CD4-positive, alpha-beta T cell (primary cell): ENCODE measurements at regions of chr17 and their contacts with region 1.

Region 1: GRCh38 chr17:42388381-42389134 is at the start of gene STAT3:
- DNase-seq: peak; percentile 100
- ATAC-seq: peak; percentile 78
- H3K4me3 ChIP-seq: peak within 1 kb of the TSS; percentile 92
- H3K4me3 Mint-ChIP-seq: peak within 1 kb of the TSS; percentile 97
- H3K27ac ChIP-seq: peak within 1 kb of the TSS; percentile 99 to 100
- H3K27ac Mint-ChIP-seq: peak within 1 kb of the TSS; percentile 99
- H3K4me1 ChIP-seq: peaks cover 26% of the 10 kb centered on the region
- H3K4me1 Mint-ChIP-seq: peaks cover 52% of the 10 kb centered on the region
- H3K27me3 ChIP-seq: no peaks in the 10 kb centered on the region
- H3K27me3 Mint-ChIP-seq: no peaks in the 10 kb centered on the region
- CTCF ChIP-seq: no peak
- total RNA-seq, gene STAT3: 315 to 319 TPM

Region 2: DNA sequence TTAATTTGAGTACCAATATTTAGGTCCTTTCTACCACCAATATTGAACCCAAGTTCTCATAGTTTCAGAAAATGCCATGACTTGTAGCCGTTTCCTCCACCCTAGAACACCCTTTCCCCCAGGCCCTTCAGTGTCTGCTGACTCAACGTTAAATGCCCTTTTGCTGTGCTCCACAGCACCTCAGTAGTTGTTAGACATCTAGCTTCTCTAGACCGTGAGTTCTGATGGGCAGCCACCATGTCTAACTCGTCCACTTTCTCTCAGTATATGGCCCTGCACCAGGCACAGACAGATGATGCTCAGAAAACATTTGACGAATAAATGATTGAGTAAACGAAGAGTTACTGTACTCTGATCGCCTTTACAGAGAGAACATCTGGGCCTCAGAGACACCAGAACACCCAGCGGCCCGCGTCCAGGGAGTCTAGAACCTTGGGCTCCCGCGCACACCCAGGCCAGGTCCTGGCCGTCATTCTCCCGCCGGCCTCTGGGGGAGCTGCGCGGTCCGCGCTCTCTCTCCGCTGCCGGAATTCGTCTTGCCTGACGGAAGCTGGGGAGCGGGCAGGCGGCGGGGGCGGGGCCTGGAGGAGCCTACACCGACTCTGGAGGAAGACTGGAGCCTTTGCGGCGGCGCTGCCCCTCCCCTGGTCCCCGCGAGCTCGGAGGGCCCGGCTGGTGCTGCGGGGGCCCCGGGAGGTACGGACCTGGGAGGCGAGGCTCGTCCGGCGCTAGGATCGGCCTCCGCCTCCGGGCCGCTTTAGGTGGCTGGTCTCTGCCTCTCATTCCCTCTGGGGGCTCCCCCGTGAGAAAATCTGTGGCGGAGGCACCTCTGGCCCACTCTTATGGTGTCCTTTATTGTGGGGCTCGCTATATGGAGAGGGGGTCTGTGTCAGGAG is 368.8 kb before region 1 on chr17 and contains the start of gene NKIRAS2:
- CTCF ChIA-PET with region 1: no interaction called
- POLR2A ChIA-PET with region 1: interaction called, 19 read pairs
- intact Hi-C with region 1: no loop called
- DNase-seq: peak; percentile 88 to 95 (median 92)
- ATAC-seq: peak; percentile 78
- H3K4me3 ChIP-seq: peak within 1 kb of the TSS; percentile 93
- H3K4me3 Mint-ChIP-seq: peak within 1 kb of the TSS; percentile 100
- H3K27ac ChIP-seq: peak within 1 kb of the TSS; percentile 64 to 80
- H3K27ac Mint-ChIP-seq: peak within 1 kb of the TSS; percentile 98
- H3K4me1 ChIP-seq: peaks cover 56% of the 10 kb centered on the region
- H3K4me1 Mint-ChIP-seq: peaks cover 66% of the 10 kb centered on the region
- H3K27me3 ChIP-seq: no peaks in the 10 kb centered on the region
- H3K27me3 Mint-ChIP-seq: no peaks in the 10 kb centered on the region
- CTCF ChIP-seq: peak; percentile 94
- total RNA-seq, gene NKIRAS2: 12.5 to 12.9 TPM

Region 3: GRCh38 chr17:42276359-42276608 is 112.3 kb before region 1 on chr17 and contains the start of gene STAT5B:
- CTCF ChIA-PET with region 1: no interaction called
- POLR2A ChIA-PET with region 1: interaction called, 21 read pairs
- intact Hi-C with region 1: no loop called
- DNase-seq: peak; percentile 33 to 89 (median 63)
- ATAC-seq: peak; percentile 32
- H3K4me3 ChIP-seq: peak within 1 kb of the TSS; percentile 91
- H3K4me3 Mint-ChIP-seq: peak within 1 kb of the TSS; percentile 92
- H3K27ac ChIP-seq: peak within 1 kb of the TSS; percentile 67 to 76
- H3K27ac Mint-ChIP-seq: peak within 1 kb of the TSS; percentile 91
- H3K4me1 ChIP-seq: peaks cover 16% of the 10 kb centered on the region
- H3K4me1 Mint-ChIP-seq: peaks cover 49% of the 10 kb centered on the region
- H3K27me3 ChIP-seq: no peaks in the 10 kb centered on the region
- H3K27me3 Mint-ChIP-seq: no peaks in the 10 kb centered on the region
- CTCF ChIP-seq: no peak
- total RNA-seq, gene STAT5B: 99.4 to 104 TPM

Region 4: DNA sequence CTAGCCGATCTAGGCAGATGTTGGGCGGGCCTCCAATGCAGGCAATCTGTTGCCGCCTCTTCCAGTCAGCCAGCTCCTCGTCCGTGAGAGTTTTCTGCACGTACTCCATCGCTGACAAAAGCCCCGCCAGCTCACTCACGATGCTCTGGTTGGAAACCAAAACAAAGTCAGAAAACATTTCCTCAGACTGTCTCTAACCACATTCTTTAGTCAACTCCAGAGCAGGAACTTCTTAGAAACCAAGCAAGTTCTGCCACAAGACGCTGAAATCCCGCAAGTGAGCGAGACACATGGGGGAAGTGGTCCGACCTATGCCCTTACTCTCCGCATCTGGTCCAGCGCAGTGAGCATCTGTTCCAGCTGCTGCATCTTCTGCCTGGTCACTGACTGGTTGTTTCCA is 51.1 kb before region 1 on chr17:
- CTCF ChIA-PET with region 1: interaction called, 7 read pairs
- POLR2A ChIA-PET with region 1: interaction called, 46 read pairs
- intact Hi-C with region 1: loop called (anchors 1 kb)
- DNase-seq: peak; percentile 55 to 91 (median 66)
- ATAC-seq: peak; percentile 84
- H3K4me3 ChIP-seq: no peak overlapping the region
- H3K4me3 Mint-ChIP-seq: peak overlapping the region; percentile 56
- H3K27ac ChIP-seq: peak overlapping the region; percentile 42 to 56
- H3K27ac Mint-ChIP-seq: peak overlapping the region; percentile 89
- H3K4me1 ChIP-seq: peaks cover 57% of the 10 kb centered on the region
- H3K4me1 Mint-ChIP-seq: peaks cover 51% of the 10 kb centered on the region
- H3K27me3 ChIP-seq: no peaks in the 10 kb centered on the region
- H3K27me3 Mint-ChIP-seq: no peaks in the 10 kb centered on the region
- CTCF ChIP-seq: no peak

Region 5: DNA sequence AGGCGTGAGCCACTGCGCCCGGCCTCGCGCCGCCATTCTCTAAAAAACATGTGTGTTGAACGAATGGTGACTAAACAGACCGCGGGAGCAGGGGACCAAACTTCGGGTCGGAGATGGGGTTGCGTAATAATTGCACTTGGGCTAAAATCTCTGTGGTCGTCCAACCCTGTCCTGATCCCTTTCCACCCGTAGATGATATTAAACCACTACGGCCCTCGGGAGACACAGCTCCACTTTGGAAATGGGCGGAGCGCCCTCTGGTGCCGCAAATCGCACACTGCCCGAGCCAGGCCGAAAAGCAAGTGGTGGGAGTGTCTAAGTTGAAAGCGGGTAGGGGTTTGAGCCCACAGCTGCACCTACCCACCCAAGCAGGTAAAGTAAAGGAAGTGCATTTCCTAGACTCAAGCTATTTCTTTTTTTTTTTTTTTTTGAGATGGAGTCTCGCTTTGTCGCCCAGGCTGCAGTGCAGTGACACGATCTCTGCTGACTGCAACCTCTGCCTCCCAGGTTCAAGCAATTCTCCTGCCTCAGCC is 17.5 kb after region 1 on chr17:
- CTCF ChIA-PET with region 1: interaction called, 27 read pairs
- POLR2A ChIA-PET with region 1: interaction called, 50 read pairs
- intact Hi-C with region 1: loop called in 1 of 2 experiments (anchors 1 kb)
- DNase-seq: peak; percentile 70 to 90 (median 82)
- ATAC-seq: peak; percentile 88
- H3K4me3 ChIP-seq: no peak overlapping the region
- H3K4me3 Mint-ChIP-seq: no peak overlapping the region
- H3K27ac ChIP-seq: no peak overlapping the region
- H3K27ac Mint-ChIP-seq: no peak overlapping the region
- H3K4me1 ChIP-seq: peaks cover 13% of the 10 kb centered on the region
- H3K4me1 Mint-ChIP-seq: peaks cover 11% of the 10 kb centered on the region
- H3K27me3 ChIP-seq: no peaks in the 10 kb centered on the region
- H3K27me3 Mint-ChIP-seq: no peaks in the 10 kb centered on the region
- CTCF ChIP-seq: peak; percentile 76

Region 6: GRCh38 chr17:42527273-42527703 is 138.7 kb after region 1 on chr17:
- CTCF ChIA-PET with region 1: no interaction called
- POLR2A ChIA-PET with region 1: interaction called, 12 read pairs
- intact Hi-C with region 1: no loop called
- DNase-seq: peak; percentile 45 to 84 (median 63)
- ATAC-seq: peak; percentile 75
- H3K4me3 ChIP-seq: no peak overlapping the region
- H3K4me3 Mint-ChIP-seq: peak overlapping the region; percentile 13
- H3K27ac ChIP-seq: no peak overlapping the region
- H3K27ac Mint-ChIP-seq: peak overlapping the region; percentile 4
- H3K4me1 ChIP-seq: peaks cover 40% of the 10 kb centered on the region
- H3K4me1 Mint-ChIP-seq: peaks cover 33% of the 10 kb centered on the region
- H3K27me3 ChIP-seq: no peaks in the 10 kb centered on the region
- H3K27me3 Mint-ChIP-seq: peaks cover 3% of the 10 kb centered on the region
- CTCF ChIP-seq: peak; percentile 51